Heart left ventricle (tissue), 16 donors: ENCODE measurements at regions of chr5 and their contacts with region 1.

Region 1: GRCh38 chr5:149672701-149673476 is 57.2 kb upstream of the PPARGC1B start:
- DNase-seq: no peak
- ATAC-seq: no peak
- H3K4me3 ChIP-seq: no peak overlapping the region
- H3K27ac ChIP-seq: no peak overlapping the region
- H3K4me1 ChIP-seq: peaks cover 0 to 36% (median 15%) of the 10 kb centered on the region in 12 donors
- H3K27me3 ChIP-seq: no peaks in the 10 kb centered on the region
- CTCF ChIP-seq: no peak
- POLR2A ChIP-seq: no peak

Region 2: DNA sequence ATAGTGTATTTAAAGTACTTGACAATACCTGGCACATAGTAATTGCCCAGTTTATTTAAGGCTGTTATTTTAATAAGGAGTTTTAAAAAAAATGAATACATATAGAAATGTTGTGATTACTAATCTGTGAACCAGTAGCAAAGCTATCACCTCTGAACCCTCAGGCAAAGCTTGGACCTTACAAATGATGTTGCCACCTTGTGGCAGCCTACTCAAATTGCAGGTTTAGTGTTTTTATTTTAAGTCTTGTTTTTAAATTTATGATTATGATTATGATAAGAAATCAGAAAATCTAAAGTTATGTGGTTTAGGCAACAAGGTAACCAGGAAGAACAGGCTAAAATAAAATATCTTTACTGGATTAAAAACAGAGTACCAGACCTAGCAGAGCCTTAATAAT is 93.0 kb after region 1 on chr5:
- intact Hi-C with region 1: loop called in 1 of 10 experiments (anchors 1 kb)
- DNase-seq: no peak
- ATAC-seq: no peak
- H3K4me3 ChIP-seq: no peak overlapping the region
- H3K27ac ChIP-seq: peak overlapping the region in 7 of 12 donors; percentile 36 to 68 (median 60)
- H3K4me1 ChIP-seq: peaks cover 0 to 82% (median 24%) of the 10 kb centered on the region in 12 donors
- H3K27me3 ChIP-seq: no peaks in the 10 kb centered on the region
- CTCF ChIP-seq: peak in 8 of 12 donors; percentile 9 to 39 (median 26)
- POLR2A ChIP-seq: no peak